Activated CD4-positive, alpha-beta T cell treated with anti-CD3 and anti-CD28 coated beads, Interleukin-2, amount 10 ng/mL, durations not matched to agents 24 days and 14 days (primary cell): ENCODE measurements at regions of chr9 and their contacts with region 1.

Region 1: GRCh38 chr9:14958989-14959388 is 48.8 kb upstream of the FREM1 start:
- DNase-seq: peak; percentile 73
- H3K4me3 Mint-ChIP-seq: peak overlapping the region; percentile 16
- H3K27ac Mint-ChIP-seq: peak overlapping the region; percentile 39
- H3K4me1 Mint-ChIP-seq: peaks cover 43% of the 10 kb centered on the region
- H3K27me3 Mint-ChIP-seq: no peaks in the 10 kb centered on the region

Region 2: GRCh38 chr9:14993061-14993800 is 34.2 kb after region 1 on chr9:
- intact Hi-C with region 1: loop called (anchors 2 kb)
- DNase-seq: peak; percentile 82
- H3K4me3 Mint-ChIP-seq: peak overlapping the region; percentile 80
- H3K27ac Mint-ChIP-seq: peak overlapping the region; percentile 47
- H3K4me1 Mint-ChIP-seq: peaks cover 39% of the 10 kb centered on the region
- H3K27me3 Mint-ChIP-seq: peaks cover 3% of the 10 kb centered on the region